K562 (cell line): ENCODE measurements at regions of chr17 and their contacts with region 1.

Region 1: DNA sequence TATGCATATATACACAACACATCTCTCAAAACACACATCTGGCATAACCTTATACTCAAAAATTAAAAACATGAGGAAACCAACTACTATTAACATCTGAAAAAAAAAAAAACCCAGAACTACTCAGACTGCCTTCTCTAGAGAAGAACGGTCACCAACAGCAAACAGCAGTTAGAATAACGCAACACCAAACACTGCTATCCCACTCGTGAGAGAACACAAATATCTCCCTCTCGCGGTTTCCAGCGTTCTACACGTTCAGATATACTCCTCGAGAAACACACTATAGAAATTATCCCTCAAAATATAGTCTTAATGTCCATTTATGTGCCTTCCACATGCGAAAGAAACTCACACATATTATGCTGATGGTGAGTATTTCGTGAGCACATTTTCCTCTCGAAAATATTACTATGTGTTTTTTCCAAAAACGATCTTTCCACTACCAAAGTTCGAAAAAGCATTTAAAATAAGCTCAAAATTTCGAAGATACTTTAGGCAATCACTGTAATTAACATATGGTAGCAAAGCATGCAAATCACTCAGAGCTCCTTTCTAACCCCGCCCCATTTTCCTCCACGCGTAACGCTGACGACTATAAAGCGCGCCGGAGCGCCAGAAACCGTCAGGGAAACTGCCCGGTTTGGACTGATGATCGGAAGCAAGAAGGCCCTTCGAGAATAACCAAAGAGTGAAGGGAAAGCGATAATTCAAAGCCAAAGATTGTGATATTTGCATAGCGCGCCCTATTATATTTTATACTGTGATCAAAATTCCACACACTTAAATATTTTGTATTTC is 60.1 kb downstream of the TEX14 start:
- DNase-seq: peak; percentile 85 to 98 (median 86)
- ATAC-seq: peak; percentile 96
- H3K4me3 ChIP-seq: peak overlapping the region; percentile 35
- H3K27ac ChIP-seq: peak overlapping the region; percentile 94
- H3K4me1 ChIP-seq: peaks cover 0 to 8% of the 10 kb centered on the region in 2 experiments; a peak in 2 of 5 replicates
- H3K27me3 ChIP-seq: no peaks in the 10 kb centered on the region
- CTCF ChIP-seq: peak; percentile 15 to 31 (median 21); a peak in 1 of 6 replicates
- EP300 ChIP-seq: peak; percentile 78
- POLR2A ChIP-seq: peak; percentile 100
- RAD21 ChIP-seq: peak in 1 of 2 experiments; percentile 52; a peak in 1 of 4 replicates

Region 2: DNA sequence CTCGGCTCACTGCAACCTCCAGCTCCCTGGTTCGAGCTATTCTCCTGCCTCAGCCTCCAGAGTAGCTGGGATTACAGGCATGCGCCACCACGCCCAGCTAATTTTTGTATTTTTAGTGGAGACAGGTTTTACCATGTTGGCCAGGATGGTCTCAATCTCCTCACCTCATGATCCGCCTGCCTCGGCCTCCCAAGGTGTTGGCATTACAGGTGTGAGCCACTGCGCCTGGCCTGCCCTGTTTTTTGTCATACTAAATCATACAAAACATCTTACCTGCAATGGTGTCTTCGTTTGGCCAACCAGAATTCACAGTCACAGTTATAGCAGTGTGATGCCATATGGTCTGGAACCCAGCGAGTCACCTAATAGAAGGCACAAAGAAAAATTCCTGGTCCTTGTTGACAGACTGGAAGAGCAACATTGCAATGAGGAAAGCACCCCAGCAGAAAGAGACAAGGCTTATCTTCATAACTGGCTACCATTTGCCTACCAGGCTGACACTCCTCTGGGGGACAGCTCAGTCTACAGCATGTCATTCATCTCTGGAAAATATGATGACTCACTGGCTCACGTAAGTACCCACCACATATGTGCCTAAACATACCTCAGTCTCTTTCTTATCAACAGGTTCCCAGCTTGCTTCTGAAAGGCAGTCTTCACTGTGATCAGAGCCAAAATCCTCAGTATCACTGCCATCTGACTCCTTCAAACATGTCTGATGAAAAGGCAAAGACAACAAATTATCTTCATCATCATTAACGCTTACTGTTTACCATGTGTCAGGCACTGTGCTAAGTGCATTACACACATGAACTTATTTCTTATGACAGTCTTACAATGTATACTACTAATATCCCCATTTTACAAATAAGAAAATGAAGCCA is 139.2 kb before region 1 on chr17:
- CTCF ChIA-PET with region 1: no interaction called
- POLR2A ChIA-PET with region 1: interaction called, 16 read pairs
- in situ Hi-C with region 1: no loop called
- intact Hi-C with region 1: no loop called
- DNase-seq: peak; percentile 80 to 93 (median 86)
- ATAC-seq: peak; percentile 100
- H3K4me3 ChIP-seq: no peak overlapping the region
- H3K27ac ChIP-seq: peak overlapping the region; percentile 77; the same call in 2 of the 3 replicates
- H3K4me1 ChIP-seq: peaks cover 13 to 16% of the 10 kb centered on the region in 2 experiments; a peak in 4 of 5 replicates
- H3K27me3 ChIP-seq: no peaks in the 10 kb centered on the region
- CTCF ChIP-seq: no peak
- EP300 ChIP-seq: peak; percentile 95
- POLR2A ChIP-seq: no peak
- RAD21 ChIP-seq: no peak

Region 3: GRCh38 chr17:58538811-58539409 is 92.8 kb before region 1 on chr17:
- CTCF ChIA-PET with region 1: no interaction called
- POLR2A ChIA-PET with region 1: interaction called, 10 read pairs
- in situ Hi-C with region 1: no loop called
- intact Hi-C with region 1: no loop called
- DNase-seq: no peak
- ATAC-seq: no peak
- H3K4me3 ChIP-seq: no peak overlapping the region
- H3K27ac ChIP-seq: no peak overlapping the region
- H3K4me1 ChIP-seq: peaks cover 0 to 22% of the 10 kb centered on the region in 2 experiments; a peak in 4 of 5 replicates
- H3K27me3 ChIP-seq: peaks cover 21 to 46% of the 10 kb centered on the region in 2 experiments; a peak in 4 of 5 replicates
- CTCF ChIP-seq: no peak
- EP300 ChIP-seq: no peak
- POLR2A ChIP-seq: no peak
- RAD21 ChIP-seq: no peak

Region 4: GRCh38 chr17:58595326-58595725 is 36.4 kb before region 1 on chr17:
- CTCF ChIA-PET with region 1: no interaction called
- POLR2A ChIA-PET with region 1: interaction called, 68 read pairs
- in situ Hi-C with region 1: no loop called
- intact Hi-C with region 1: loop called (anchors 2 kb)
- DNase-seq: peak in 1 of 4 experiments; percentile 21
- ATAC-seq: peak; percentile 82
- H3K4me3 ChIP-seq: no peak overlapping the region
- H3K27ac ChIP-seq: no peak overlapping the region
- H3K4me1 ChIP-seq: no peaks in the 10 kb centered on the region; a peak in 1 of 5 replicates
- H3K27me3 ChIP-seq: no peaks in the 10 kb centered on the region
- CTCF ChIP-seq: peak; percentile 14 to 21 (median 19); a peak in 3 of 6 replicates
- EP300 ChIP-seq: no peak
- POLR2A ChIP-seq: no peak
- RAD21 ChIP-seq: peak in 1 of 2 experiments; percentile 40; a peak in 2 of 4 replicates

Region 5: DNA sequence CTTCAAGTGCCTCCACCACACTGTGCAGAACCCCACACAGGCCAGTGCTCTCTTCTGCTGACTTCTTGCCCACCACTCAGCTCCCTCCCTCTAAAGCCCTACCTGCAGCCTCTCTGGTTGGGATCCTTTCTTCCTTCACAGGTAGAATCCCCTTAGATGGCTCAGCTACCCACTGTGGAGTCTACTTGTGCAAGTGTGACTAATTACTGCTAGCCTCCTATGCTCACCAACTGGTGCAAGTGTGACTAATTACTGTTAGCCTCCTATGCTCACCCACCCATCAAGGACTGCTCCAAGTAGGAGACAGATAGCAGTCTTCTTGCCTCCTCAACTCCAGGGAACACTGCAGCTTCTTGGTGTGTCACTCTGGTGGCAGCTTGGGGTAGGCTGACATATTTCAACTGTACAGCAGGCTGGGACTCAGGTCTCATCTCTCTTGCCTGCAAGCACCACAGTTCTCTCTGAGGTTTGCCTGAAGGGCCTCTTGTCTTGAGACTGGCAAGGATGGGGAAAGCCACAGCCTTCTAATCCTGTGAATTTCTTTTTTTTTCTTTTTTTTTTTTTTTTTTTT is 16.6 kb after region 1 on chr17:
- CTCF ChIA-PET with region 1: no interaction called
- POLR2A ChIA-PET with region 1: interaction called, 281 read pairs
- in situ Hi-C with region 1: no loop called
- intact Hi-C with region 1: no loop called
- DNase-seq: no peak
- ATAC-seq: peak; percentile 54
- H3K4me3 ChIP-seq: no peak overlapping the region
- H3K27ac ChIP-seq: no peak overlapping the region
- H3K4me1 ChIP-seq: no peaks in the 10 kb centered on the region
- H3K27me3 ChIP-seq: no peaks in the 10 kb centered on the region
- CTCF ChIP-seq: no peak
- EP300 ChIP-seq: no peak
- POLR2A ChIP-seq: no peak
- RAD21 ChIP-seq: no peak

Region 6: DNA sequence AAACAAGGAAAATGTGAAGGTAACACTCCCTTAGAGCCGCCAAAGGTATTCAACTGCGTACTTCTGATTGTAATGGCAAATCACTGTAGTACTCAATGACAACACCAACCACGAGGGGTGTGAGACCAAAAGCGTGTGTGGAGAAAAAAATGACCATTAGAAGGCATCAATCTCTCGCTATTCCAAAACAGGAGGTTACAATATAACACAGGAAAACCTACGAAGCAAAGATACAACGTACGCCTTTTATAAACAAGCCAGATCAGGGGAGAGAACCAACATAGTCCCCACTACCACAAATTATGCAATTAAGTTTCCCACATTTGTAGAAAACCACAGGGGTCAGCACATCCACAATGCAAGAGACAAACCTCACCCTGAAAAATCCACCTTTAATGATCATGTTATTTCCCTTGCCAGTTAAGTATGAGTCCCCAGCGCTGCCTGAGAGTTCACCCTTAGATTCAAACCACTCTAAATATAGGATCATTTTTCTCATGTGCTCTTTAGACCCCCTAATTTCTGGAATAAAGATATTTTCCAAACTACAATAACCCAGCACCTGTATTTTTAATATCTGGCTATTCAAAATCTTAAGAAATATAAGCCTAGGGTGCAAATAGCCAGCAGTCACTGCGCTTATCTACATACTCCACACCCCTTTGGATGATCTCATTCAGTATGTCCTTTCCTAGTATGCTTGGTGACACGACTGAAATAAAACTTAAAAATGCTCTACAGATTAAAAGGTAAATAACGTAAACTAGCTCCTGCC is 47.7 kb after region 1 on chr17:
- CTCF ChIA-PET with region 1: no interaction called
- POLR2A ChIA-PET with region 1: interaction called, 50 read pairs
- in situ Hi-C with region 1: no loop called
- intact Hi-C with region 1: loop called (anchors 1 kb)
- DNase-seq: peak; percentile 62 to 93 (median 75)
- ATAC-seq: peak; percentile 96
- H3K4me3 ChIP-seq: no peak overlapping the region
- H3K27ac ChIP-seq: peak overlapping the region; percentile 92
- H3K4me1 ChIP-seq: peaks cover 0 to 3% of the 10 kb centered on the region in 2 experiments; a peak in 2 of 5 replicates
- H3K27me3 ChIP-seq: no peaks in the 10 kb centered on the region
- CTCF ChIP-seq: peak; percentile 14 to 33 (median 30); a peak in 2 of 6 replicates
- EP300 ChIP-seq: peak; percentile 84
- POLR2A ChIP-seq: peak; percentile 100
- RAD21 ChIP-seq: peak; percentile 28 to 81; a peak in 3 of 4 replicates

Region 7: DNA sequence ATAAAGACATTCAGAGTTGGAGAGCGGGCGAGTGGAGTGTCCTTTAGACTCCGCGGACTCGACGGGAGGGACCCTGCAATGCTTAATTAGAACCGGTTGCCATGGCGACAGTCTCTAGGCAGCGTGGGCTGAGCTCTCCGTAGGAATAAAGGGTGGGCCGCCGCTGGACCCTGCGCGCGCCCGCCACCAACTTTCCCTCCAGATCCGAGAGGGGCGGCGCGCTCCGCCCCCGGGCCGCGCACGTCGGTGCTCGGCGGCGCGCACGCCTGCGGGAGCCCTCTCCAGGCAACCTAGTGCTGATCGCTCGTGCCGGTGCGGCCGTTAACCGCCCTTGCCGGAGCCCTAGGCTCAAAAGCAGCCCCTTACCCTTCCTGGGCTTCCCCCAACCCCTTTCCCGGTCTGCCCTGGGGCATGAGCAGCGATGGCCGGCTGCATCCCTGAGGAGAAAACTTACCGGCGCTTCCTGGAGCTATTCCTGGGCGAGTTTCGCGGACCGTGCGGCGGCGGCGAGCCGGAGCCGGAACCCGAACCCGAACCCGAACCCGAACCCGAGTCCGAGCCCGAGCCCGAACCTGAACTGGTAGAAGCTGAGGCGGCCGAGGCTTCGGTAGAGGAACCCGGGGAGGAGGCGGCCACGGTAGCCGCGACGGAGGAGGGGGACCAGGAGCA is 124.0 kb after region 1 on chr17 and contains the start of gene PPM1E:
- CTCF ChIA-PET with region 1: no interaction called
- POLR2A ChIA-PET with region 1: interaction called, 20 read pairs
- in situ Hi-C with region 1: no loop called
- intact Hi-C with region 1: no loop called
- DNase-seq: peak; percentile 81 to 88 (median 84)
- ATAC-seq: peak; percentile 89
- H3K4me3 ChIP-seq: peak within 1 kb of the TSS; percentile 70
- H3K27ac ChIP-seq: 0 out of 3 replicates have a peak within 1 kb of the TSS, but pooled peaks have one; percentile 26
- H3K4me1 ChIP-seq: peaks cover 6 to 14% of the 10 kb centered on the region in 2 experiments; a peak in 4 of 5 replicates
- H3K27me3 ChIP-seq: no peaks in the 10 kb centered on the region
- CTCF ChIP-seq: no peak
- EP300 ChIP-seq: no peak
- POLR2A ChIP-seq: no peak
- RAD21 ChIP-seq: no peak
- polyA plus RNA-seq, gene PPM1E: 1.0 to 1.8 TPM

Region 8: GRCh38 chr17:58800240-58800908 is 168.7 kb after region 1 on chr17:
- CTCF ChIA-PET with region 1: no interaction called
- POLR2A ChIA-PET with region 1: no interaction called
- in situ Hi-C with region 1: no loop called
- intact Hi-C with region 1: no loop called
- DNase-seq: no peak
- ATAC-seq: no peak
- H3K4me3 ChIP-seq: no peak overlapping the region
- H3K27ac ChIP-seq: no peak overlapping the region
- H3K4me1 ChIP-seq: no peaks in the 10 kb centered on the region
- H3K27me3 ChIP-seq: no peaks in the 10 kb centered on the region
- CTCF ChIP-seq: no peak
- EP300 ChIP-seq: no peak
- POLR2A ChIP-seq: no peak
- RAD21 ChIP-seq: no peak